ENCODE measurements at regions of chr4 and their contacts with region 1.

Region 1: GRCh38 chr4:184538023-184538599 is 63.8 kb upstream of the IRF2 start:
- DNase-seq: peak; percentile 56
- ATAC-seq: peak; percentile 53
- H3K4me3 Mint-ChIP-seq: peak overlapping the region; percentile 90
- H3K27ac Mint-ChIP-seq: peak overlapping the region; percentile 89
- H3K4me1 Mint-ChIP-seq: peaks cover 35% of the 10 kb centered on the region
- H3K27me3 Mint-ChIP-seq: no peaks in the 10 kb centered on the region

Region 2: DNA sequence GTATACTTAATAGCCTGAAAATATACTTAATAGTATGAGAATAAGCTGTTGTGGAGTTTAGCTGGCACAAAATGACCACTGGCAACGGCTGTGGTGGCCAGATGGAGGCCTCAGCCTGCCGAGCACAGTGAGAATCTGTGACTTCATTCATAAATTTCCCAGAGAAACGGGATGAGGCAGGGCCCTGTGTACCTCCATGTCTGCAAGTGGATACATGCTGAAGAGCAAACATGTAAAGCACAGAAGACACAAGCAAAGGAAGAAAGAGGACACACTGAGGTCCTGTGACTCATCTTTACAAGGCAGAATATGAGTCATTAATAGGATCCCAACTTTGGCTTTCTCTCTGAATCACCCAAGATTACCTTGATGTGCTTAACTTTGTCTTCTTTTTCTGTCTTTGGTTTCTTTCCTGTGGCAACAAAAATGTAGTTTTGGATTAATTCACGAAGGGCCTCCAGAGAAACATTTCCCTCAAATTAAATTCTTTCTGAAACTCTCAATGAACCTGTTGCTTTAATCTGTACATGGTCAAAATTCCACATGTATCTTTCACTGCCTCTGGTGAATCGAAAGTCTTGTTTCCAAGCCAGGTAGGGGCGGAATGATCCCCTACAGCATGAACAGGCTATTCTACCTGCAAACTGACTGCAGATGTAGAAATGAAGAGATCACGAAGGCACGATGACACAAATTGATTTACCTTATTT is 120.2 kb before region 1 on chr4:
- POLR2A ChIA-PET with region 1: interaction called, 11 read pairs
- DNase-seq: no peak
- ATAC-seq: peak; percentile 81
- H3K4me3 Mint-ChIP-seq: peak overlapping the region; percentile 88
- H3K27ac Mint-ChIP-seq: peak overlapping the region; percentile 99
- H3K4me1 Mint-ChIP-seq: peaks cover 60% of the 10 kb centered on the region
- H3K27me3 Mint-ChIP-seq: no peaks in the 10 kb centered on the region

Region 3: DNA sequence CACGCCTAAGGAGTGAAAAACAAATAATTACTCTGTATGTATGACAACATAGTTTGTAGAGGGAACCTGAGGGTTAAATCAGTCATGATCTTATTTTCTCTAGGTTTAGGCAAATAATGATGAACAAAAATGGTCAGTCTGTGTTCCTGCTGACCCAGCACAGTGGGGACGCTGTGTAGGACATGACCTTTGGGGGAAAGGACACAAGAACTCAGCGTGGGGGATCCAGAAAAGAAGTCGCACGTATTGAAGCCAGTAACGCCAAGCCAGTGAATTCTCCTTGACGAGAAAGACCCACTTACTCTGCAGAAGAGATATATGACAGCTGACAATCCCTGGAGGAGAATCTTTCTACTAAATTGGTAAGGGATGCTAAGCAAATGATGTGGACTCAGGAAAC is 516.8 kb after region 1 on chr4:
- POLR2A ChIA-PET with region 1: no interaction called
- DNase-seq: no peak
- ATAC-seq: no peak
- H3K4me3 Mint-ChIP-seq: no peak overlapping the region
- H3K27ac Mint-ChIP-seq: no peak overlapping the region
- H3K4me1 Mint-ChIP-seq: no peaks in the 10 kb centered on the region
- H3K27me3 Mint-ChIP-seq: peaks cover 42% of the 10 kb centered on the region

Measured in activated naive CD8-positive, alpha-beta T cell treated with anti-CD3 and anti-CD28 coated beads, Interleukin-2, amount 10 ng/mL, durations not matched to agents 7 days and 5 days (primary cell).